Activated CD4-positive, alpha-beta T cell treated with anti-CD3 and anti-CD28 coated beads for 36 hours (primary cell): ENCODE measurements at regions of chr1 and their contacts with region 1.

Region 1: DNA sequence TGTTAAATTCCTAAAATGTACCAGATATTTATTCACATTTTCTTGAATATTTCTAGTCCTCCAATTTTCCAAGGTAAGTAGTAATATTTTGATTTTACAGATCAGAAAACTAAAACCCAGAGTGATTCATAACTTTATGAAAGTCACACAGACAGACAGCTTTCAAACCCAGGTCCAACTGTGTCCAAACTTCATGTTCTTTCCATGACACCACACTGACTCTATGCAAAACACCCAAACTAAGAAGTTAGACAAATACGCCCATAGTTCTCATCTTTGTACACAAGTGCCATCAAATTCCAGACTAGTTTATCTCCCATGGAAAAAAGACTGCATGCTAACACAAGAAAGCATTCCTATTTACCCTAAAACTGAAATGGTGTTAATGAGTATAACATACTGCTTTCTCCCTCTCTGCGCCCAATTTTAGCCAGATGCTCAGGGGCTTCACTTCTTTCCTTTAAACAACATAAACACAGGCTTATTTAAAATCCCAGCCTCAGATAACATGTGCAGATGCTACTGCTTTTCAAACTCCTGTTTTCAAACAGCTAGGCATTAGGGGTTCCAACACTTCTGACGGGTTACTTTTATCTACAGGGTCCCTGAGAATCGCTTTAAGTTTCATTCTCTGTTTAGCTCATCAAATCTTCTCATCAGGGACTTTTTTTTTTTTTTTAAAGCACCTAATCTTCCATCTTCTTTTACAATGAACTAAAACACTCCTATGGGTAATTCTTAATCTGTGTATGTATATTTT is 44.6 kb downstream of the WASF2 start:
- DNase-seq: peak; percentile 20
- ATAC-seq: peak; percentile 74
- H3K4me3 Mint-ChIP-seq: peak overlapping the region; percentile 61
- H3K27ac Mint-ChIP-seq: peak overlapping the region; percentile 95
- H3K4me1 Mint-ChIP-seq: peaks cover 60% of the 10 kb centered on the region
- H3K27me3 Mint-ChIP-seq: no peaks in the 10 kb centered on the region

Region 2: DNA sequence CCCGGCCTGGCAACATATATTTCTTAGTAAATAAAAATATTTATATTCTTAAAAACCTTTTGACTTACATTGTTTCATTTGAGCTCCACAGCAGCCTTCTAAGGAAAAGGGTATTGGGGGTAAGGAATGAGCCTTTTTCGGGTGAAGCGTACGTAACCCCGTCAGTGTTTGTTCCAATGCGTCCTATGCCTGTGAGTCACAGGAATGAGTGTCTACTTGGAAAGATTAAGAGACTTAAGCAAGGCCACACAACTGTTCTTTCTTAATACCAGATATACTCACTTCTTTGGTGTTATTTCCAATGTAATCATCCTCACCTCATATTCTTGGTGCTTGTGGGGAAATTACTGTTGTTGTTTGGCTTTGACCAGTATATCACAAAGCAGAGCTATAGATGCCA is 188.2 kb before region 1 on chr1:
- CTCF ChIA-PET with region 1: no interaction called
- POLR2A ChIA-PET with region 1: no interaction called
- intact Hi-C with region 1: loop called in 1 of 2 experiments (anchors 2 kb)
- DNase-seq: no peak
- ATAC-seq: no peak
- H3K4me3 Mint-ChIP-seq: no peak overlapping the region
- H3K27ac Mint-ChIP-seq: no peak overlapping the region
- H3K4me1 Mint-ChIP-seq: peaks cover 50% of the 10 kb centered on the region
- H3K27me3 Mint-ChIP-seq: no peaks in the 10 kb centered on the region

Region 3: DNA sequence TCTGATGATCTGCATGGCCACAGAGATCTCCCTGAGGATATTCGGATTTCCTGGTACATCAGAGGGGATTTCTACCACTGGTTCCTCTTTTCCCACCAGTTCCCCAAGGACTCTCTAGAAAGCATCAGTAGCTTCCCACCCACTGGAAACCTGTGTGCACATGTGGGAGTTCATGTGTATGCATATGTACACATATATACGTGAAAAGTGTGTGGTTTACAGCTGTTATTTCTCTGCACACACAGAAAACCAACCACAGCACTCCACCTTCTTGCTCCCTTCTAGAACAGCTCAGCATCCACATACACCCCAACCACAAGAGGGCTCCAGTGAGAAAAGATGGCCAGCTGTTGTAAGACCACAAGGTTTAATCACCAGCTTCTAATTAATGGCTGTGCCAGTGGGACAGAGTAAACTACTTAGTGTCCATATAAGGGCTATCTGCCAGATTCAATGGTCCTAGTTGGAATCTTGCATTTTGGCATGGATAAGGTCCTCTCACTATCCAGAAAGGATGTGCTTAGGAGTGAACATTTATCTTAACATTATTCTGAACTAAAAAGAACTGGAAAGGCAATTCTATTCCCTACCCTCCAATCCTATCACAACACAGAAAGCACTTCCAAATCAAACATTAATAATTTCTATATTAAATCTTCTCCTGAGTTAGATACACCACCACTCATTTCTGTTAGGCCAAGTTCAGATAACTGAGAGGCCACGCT is 28.8 kb before region 1 on chr1:
- CTCF ChIA-PET with region 1: interaction called, 15 read pairs
- POLR2A ChIA-PET with region 1: interaction called, 4 read pairs
- intact Hi-C with region 1: loop called in 1 of 2 experiments (anchors 1 kb)
- DNase-seq: peak; percentile 69
- ATAC-seq: peak; percentile 64
- H3K4me3 Mint-ChIP-seq: no peak overlapping the region
- H3K27ac Mint-ChIP-seq: peak overlapping the region; percentile 40
- H3K4me1 Mint-ChIP-seq: peaks cover 40% of the 10 kb centered on the region
- H3K27me3 Mint-ChIP-seq: no peaks in the 10 kb centered on the region

Region 4: DNA sequence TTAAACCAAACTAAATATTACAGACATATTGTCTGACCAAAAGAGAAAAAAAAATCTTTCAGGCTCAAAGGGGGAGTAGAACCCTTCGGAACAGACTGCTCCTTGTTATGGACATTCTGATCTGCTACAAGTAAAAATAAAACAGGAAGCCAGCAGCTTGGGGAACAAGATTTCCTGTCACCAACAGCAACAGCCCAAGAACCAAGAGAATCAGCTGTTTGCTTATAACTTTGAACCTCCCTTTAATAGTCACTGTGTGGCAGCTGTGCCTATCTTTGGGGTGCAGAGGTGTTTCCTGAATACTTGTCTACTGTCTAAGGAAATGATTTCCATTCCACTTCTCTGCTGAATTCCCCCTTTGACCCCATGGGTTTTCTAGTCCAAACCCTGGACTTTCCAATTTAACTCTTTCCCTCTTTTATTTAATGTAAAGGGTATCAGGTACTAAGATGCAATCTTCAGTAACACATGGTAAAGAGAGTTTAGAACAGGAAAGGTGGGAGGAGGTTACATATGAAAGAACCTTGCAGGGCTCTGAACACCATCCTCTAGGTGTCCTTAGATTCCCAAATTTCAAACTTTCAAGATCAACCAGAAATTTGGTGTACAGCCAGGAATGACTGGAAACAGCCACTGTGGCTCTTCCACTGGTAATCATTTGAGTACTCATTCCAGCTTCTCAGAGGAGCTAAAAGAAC is 14.3 kb before region 1 on chr1:
- CTCF ChIA-PET with region 1: interaction called, 8 read pairs
- POLR2A ChIA-PET with region 1: interaction called, 8 read pairs
- intact Hi-C with region 1: loop called (anchors 1 to 2 kb)
- DNase-seq: no peak
- ATAC-seq: peak; percentile 37
- H3K4me3 Mint-ChIP-seq: peak overlapping the region; percentile 21
- H3K27ac Mint-ChIP-seq: peak overlapping the region; percentile 79
- H3K4me1 Mint-ChIP-seq: peaks cover 85% of the 10 kb centered on the region
- H3K27me3 Mint-ChIP-seq: no peaks in the 10 kb centered on the region

Region 5: DNA sequence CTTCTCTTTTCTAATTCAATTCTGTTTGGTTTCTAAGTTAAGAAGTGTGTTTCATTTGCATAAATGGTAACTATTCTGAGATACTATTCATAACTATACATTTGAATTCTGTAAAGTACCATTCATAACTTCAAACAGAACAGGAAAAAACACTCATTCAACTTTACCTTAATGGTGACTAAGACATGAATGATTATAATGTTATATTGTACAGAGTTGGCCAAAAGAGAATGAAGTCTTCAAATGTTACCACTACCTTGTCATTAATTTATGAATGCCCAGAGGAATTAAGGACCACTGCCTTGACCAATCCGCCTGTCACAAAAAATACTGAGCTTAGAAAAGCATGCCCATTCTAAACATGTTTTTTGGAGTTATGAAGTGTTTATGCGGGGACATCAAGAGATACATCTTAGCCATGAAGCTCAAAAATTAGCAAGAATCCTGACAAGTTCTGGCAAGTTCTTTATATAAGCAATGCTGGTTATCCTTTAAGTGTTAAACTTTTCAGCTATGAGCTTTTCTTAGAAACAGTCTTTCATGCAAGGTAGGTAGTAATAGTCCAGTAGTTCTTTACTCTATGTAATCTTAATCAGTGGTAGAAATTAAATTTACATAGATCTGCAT is 36.8 kb after region 1 on chr1:
- CTCF ChIA-PET with region 1: interaction called, 9 read pairs
- POLR2A ChIA-PET with region 1: no interaction called
- intact Hi-C with region 1: loop called in 1 of 2 experiments (anchors 1 kb)
- DNase-seq: no peak
- ATAC-seq: peak; percentile 87
- H3K4me3 Mint-ChIP-seq: no peak overlapping the region
- H3K27ac Mint-ChIP-seq: peak overlapping the region; percentile 83
- H3K4me1 Mint-ChIP-seq: peaks cover 58% of the 10 kb centered on the region
- H3K27me3 Mint-ChIP-seq: no peaks in the 10 kb centered on the region

Region 6: DNA sequence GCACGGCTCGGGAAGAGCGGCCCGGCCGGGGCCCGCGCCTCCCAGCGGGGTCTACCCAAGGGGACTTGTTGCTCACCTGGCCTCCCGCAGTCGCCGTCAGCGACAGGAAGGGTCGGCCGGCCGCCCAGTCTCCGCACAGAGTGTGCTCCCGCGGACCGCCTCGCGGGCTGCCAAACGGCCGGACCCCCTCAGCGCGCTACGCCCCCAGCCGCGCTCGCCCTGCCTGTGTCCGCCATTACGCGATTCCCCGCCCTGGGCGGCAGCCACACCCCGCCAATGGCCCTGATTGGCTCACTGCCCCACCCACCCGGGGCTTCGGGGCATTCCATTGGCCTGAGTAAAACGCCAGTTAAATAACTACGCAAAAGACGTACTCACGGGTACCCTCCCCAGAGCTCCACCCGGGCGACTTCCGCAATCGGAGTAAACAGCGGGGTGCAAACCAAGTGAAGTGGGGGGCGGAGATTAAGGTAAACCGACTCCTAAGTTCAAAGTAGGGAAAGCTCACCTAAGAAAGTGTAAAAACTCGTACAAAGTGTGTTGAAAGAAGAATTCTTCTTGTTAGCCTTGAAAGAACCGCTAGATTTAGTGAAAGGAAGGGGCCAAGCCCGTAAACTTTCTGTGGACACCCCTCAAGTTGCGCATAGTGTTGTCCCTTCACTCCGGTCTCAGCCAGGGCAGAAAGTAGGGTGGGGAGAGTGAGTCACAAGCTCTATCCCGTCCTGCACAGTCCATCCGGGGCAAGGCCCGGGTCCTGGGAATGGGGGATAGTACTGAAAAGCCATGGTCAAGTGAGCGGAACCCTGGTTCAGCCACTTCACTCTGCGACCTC is 44.8 kb after region 1 on chr1 and contains the start of gene WASF2:
- CTCF ChIA-PET with region 1: interaction called, 3 read pairs
- POLR2A ChIA-PET with region 1: interaction called, 3 read pairs
- intact Hi-C with region 1: loop called (anchors 1 to 2 kb)
- DNase-seq: peak; percentile 98
- ATAC-seq: peak; percentile 96
- H3K4me3 Mint-ChIP-seq: peak within 1 kb of the TSS; percentile 98
- H3K27ac Mint-ChIP-seq: peak within 1 kb of the TSS; percentile 99
- H3K4me1 Mint-ChIP-seq: peaks cover 28% of the 10 kb centered on the region
- H3K27me3 Mint-ChIP-seq: no peaks in the 10 kb centered on the region
- total RNA-seq, gene WASF2: 104 to 132 TPM

Region 7: GRCh38 chr1:27525296-27526272 is 80.2 kb after region 1 on chr1:
- CTCF ChIA-PET with region 1: interaction called, 7 read pairs
- POLR2A ChIA-PET with region 1: no interaction called
- intact Hi-C with region 1: loop called in 1 of 2 experiments (anchors 5 kb)
- DNase-seq: peak; percentile 87
- ATAC-seq: peak; percentile 53
- H3K4me3 Mint-ChIP-seq: peak overlapping the region; percentile 63
- H3K27ac Mint-ChIP-seq: peak overlapping the region; percentile 81
- H3K4me1 Mint-ChIP-seq: peaks cover 60% of the 10 kb centered on the region
- H3K27me3 Mint-ChIP-seq: no peaks in the 10 kb centered on the region

Region 8: DNA sequence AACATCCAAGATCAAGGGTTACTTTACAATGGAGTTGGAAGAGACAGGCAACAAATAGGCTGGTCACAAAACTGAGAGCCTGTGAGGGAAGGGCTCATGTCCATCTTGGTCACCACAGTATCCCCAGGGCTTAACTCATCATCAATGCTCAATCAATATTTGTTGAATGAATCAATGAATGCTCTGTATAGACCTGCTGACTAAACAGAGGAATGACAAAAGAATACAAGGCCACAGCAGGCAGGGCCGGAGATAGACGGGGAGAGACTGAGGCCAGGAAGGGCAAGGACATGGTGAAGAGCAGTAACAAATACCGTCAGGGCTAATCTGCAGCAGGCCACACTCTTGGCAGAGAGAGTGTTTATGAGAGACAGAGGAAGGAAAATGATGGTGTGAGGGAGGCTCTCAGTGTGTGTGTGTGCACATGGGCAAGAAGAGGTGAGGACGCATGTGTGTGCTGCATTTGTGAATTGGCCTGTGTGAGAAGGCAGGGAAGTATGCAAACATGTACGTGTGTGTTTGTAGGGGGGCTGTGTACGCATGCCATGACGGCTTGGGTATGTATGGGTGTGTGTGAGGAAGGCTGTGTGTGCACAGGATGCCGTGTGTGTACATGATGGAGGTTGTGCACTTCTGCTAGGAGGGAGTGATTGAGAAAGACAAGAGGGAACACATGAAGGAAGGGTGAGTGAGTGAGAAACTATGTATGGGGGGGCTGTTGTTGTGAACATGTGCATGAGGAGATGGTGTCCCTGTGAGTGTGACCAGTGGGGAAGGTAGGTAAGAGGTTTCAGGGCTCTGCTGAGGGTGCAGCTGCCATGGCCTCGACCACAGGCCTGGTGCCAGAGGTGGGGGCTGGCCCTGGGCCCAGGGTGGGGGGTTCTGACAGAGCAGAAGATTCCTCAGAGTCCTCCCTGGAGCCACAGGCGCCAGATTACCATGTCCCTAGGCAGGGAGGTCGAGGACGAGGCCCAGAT is 143.2 kb after region 1 on chr1:
- CTCF ChIA-PET with region 1: no interaction called
- POLR2A ChIA-PET with region 1: no interaction called
- intact Hi-C with region 1: no loop called
- DNase-seq: no peak
- ATAC-seq: no peak
- H3K4me3 Mint-ChIP-seq: no peak overlapping the region
- H3K27ac Mint-ChIP-seq: no peak overlapping the region
- H3K4me1 Mint-ChIP-seq: peaks cover 1% of the 10 kb centered on the region
- H3K27me3 Mint-ChIP-seq: no peaks in the 10 kb centered on the region